ENCODE measurements at regions of chr14 and their contacts with region 1.

Region 1: DNA sequence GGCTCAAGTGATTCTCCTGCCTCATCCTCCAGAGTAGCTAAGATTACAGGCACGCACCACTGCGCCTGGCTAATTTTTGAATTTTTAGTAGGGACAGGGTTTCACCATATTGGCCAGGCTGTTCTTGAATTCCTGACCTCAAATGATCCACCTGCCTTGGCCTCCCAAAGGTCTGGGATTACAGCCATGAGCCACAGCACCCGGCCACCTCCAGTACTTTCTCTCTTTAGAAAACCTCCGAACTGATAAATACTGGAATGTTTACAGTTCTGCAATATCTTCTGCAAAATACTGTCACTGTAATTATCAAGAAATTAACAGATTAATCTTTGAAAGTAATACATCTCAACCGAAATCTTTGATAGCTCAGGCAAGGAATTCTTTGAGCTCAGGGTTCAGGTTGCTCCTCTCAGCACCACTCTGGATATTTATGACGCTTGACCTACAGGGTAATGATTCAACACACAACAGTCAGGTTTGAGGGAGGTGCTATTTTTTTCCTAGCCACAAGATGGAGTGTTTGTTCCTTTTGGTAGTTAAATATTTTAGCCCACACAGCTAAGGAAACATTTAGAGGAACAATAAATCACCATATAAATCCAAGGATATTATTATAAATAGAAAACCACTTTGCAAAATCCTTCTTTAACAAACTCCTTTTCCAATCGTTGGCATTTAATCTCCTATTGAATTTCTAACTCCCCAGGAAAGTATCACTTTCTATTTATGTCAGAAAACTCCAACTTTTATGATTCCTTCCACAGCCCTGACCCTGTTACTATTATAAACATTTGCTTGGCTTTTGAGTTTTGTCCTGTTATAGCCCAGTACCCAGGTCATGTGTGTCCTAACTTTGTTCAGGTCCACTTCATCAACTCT is 48.6 kb upstream of the GTF2A1 start:
- DNase-seq: peak; percentile 66 to 76 (median 69)
- H3K4me3 ChIP-seq: no peak overlapping the region
- H3K27ac ChIP-seq: no peak overlapping the region
- H3K4me1 ChIP-seq: peaks cover 7 to 31% (median 22%) of the 10 kb centered on the region in 4 experiments
- H3K27me3 ChIP-seq: no peaks in the 10 kb centered on the region

Region 2: DNA sequence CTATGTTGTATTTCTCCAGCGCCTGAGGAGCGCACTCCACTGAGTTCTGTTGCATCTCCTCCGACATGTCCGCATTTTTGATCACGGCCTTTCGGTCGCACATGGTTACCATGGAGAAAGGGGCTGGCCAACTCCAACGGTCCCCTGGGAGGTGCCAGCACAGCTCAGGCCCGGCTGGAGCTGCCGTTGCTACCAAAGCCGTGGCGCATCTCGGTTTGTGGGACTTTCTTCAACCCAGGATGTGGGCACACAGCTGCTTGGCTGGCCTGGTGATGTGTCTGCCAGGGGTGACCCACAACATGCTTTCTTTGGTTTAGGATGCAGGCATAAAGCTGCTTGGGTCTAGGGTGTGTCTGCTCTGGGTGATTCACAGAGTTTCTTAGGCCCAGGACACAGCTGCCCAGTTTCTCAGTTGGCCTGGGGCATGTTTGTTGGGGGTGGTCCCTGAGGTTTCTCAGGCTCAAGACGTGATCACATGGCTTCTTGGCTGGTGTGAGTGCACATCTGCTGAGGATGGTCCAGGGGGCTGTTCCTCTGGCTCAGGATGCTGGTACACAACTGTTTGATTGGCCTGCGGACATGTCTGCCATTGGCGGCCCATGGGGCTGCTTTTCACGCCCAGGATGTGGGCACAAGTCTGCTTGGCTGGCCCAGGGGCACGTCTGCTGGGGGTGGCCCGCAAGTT is 22.7 kb before region 1 on chr14:
- CTCF ChIA-PET with region 1: interaction called, 13 read pairs
- POLR2A ChIA-PET with region 1: no interaction called
- DNase-seq: no peak
- H3K4me3 ChIP-seq: no peak overlapping the region
- H3K27ac ChIP-seq: no peak overlapping the region
- H3K4me1 ChIP-seq: no peaks in the 10 kb centered on the region
- H3K27me3 ChIP-seq: no peaks in the 10 kb centered on the region

Region 3: DNA sequence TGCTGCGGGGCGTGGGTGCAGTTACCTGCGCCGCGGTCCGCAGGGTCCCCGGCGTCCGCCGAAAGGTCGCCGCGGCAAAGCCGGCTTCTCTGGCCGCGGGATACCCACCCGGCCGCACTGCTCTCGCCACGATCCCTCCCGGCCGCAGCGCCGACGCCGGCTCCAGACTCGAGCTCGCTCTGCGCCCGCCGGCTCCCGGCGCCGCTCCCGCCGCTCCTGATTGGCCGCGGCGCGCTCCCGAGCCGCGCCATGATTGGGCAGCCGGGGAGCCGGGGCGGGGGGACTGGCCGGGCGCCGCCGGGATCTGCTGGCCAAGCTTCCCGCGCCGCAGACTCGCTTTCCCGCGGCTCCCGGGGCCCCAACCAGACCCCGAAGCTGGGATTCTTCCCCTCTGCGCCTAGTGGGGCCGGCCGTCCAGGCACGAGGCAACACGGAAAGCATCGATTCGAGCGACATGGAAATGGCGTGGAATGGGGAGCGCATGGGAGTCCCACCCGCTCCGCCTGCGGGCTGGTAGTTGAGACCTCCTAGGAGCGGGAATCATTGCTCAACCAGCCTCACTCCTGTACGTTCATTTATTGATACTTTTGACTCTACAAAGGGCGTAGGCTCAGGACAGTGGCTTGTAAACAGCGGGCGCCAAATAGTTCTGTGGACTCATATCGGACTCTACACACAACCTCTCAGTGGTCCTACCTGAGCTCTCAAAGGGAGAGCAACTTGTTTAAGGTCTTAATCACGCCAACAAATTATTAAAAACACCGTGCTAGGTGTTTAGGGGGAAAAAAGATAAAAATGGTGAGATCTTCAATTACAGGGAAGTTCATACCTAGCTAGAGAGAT is 167.2 kb after region 1 on chr14:
- CTCF ChIA-PET with region 1: interaction called, 11 read pairs
- POLR2A ChIA-PET with region 1: no interaction called
- DNase-seq: peak; percentile 75 to 82 (median 76)
- H3K4me3 ChIP-seq: peak overlapping the region; percentile 36 to 87 (median 75)
- H3K27ac ChIP-seq: no peak overlapping the region
- H3K4me1 ChIP-seq: peaks cover 11 to 50% (median 23%) of the 10 kb centered on the region in 4 experiments
- H3K27me3 ChIP-seq: no peaks in the 10 kb centered on the region

Region 4: GRCh38 chr14:81453166-81453766 is 183.9 kb after region 1 on chr14:
- CTCF ChIA-PET with region 1: interaction called, 285 read pairs
- POLR2A ChIA-PET with region 1: no interaction called
- DNase-seq: peak; percentile 66 to 78 (median 72)
- H3K4me3 ChIP-seq: peak overlapping the region in 1 of 7 experiments; percentile 11
- H3K27ac ChIP-seq: no peak overlapping the region
- H3K4me1 ChIP-seq: peaks cover 0 to 15% (median 1%) of the 10 kb centered on the region in 4 experiments
- H3K27me3 ChIP-seq: no peaks in the 10 kb centered on the region

Region 5: DNA sequence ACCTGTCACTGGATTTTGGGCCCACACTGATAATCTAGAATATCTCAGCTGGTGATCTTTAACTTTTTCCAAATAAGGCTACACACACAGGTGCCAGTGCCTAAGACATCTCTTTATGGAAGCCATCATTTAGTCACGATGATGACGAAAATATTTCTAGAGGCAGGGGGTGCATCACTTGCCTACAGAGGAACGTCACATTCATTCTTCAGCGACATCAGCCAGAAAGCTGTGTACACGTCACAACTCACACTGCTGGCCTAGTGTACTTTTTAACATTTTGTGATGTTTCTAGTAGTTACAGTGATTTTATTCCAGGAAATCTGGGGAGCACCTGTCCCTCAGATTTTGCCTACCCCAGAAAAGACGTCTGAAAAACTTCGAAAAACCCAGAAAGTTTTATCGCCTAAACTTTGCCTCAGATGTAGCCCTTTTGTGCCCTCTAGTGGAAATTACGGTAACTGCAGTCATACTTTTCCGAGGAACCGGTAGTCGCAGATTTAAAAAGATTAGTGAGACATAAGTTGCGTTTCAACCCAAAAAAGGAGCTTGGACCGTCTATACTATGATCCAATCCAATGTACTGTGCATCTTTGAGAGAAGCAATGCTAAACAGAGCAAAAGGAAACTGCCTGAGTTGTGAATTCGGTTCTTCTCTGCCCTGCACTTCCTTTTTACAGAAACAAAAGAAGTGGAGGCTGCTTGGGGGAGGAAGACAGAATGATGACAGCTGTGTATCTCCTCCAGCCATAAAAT is 195.1 kb after region 1 on chr14:
- CTCF ChIA-PET with region 1: interaction called, 285 read pairs
- POLR2A ChIA-PET with region 1: no interaction called
- DNase-seq: peak; percentile 68 to 84 (median 77)
- H3K4me3 ChIP-seq: peak overlapping the region in 6 of 7 experiments; percentile 58 to 98 (median 88)
- H3K27ac ChIP-seq: peak overlapping the region in 1 of 2 experiments; percentile 67
- H3K4me1 ChIP-seq: peaks cover 0 to 4% (median 4%) of the 10 kb centered on the region in 4 experiments
- H3K27me3 ChIP-seq: no peaks in the 10 kb centered on the region